GM12878 (cell line): ENCODE measurements at regions of chr16 and their contacts with region 1.

Region 1: GRCh38 chr16:15739950-15740349 is 89.9 kb downstream of the NDE1 start:
- DNase-seq: no peak
- ATAC-seq: no peak
- H3K4me3 ChIP-seq: no peak overlapping the region
- H3K27ac ChIP-seq: no peak overlapping the region
- H3K4me1 ChIP-seq: no peaks in the 10 kb centered on the region
- H3K27me3 ChIP-seq: peaks cover 0 to 1% of the 10 kb centered on the region in 2 experiments; a peak in 1 of 4 replicates
- CTCF ChIP-seq: no peak
- EP300 ChIP-seq: no peak
- POLR2A ChIP-seq: no peak
- RAD21 ChIP-seq: no peak

Region 2: DNA sequence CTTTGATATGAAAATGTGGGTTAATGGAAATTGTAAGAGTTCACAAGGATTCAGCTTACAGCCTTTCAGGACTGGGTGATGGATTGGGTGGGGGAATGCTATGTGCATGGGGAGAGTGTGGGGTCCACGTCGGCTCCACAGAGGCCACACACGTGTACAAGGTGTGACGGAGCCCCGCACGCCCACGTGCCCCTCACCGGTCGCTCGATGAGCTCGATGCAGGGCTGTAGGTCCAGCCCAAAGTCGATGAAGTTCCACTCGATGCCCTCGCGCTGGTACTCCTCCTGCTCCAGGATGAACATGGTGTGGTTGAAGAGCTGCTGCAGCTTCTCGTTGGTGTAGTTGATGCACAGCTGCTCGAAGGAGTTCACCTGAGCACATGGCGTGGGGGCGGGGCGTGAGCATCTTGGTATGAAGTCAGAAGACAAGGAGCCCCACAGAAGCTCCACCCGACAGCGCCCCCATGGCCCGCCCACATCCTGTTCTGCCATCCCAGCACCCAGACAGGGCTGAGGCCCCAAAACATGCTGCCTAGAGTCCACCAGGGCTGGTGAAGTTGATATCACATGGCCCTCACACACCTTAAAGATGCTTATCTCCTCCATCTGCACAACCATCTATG is 17.8 kb after region 1 on chr16:
- CTCF ChIA-PET with region 1: interaction called, 12 read pairs
- POLR2A ChIA-PET with region 1: no interaction called
- RAD21 ChIA-PET with region 1: interaction called, 3 read pairs
- SMC1A ChIA-PET with region 1: interaction called, 3 read pairs
- in situ Hi-C with region 1: no loop called
- intact Hi-C with region 1: no loop called
- DNase-seq: no peak
- ATAC-seq: no peak
- H3K4me3 ChIP-seq: no peak overlapping the region
- H3K27ac ChIP-seq: no peak overlapping the region
- H3K4me1 ChIP-seq: no peaks in the 10 kb centered on the region
- H3K27me3 ChIP-seq: no peaks in the 10 kb centered on the region
- CTCF ChIP-seq: no peak
- EP300 ChIP-seq: no peak
- POLR2A ChIP-seq: no peak
- RAD21 ChIP-seq: no peak